Activated CD8-positive, alpha-beta memory T cell treated with anti-CD3 and anti-CD28 coated beads, Interleukin-2, amount 10 ng/mL, durations not matched to agents 7 days and 5 days (primary cell): ENCODE measurements at regions of chr21 and their contacts with region 1.

Region 1: DNA sequence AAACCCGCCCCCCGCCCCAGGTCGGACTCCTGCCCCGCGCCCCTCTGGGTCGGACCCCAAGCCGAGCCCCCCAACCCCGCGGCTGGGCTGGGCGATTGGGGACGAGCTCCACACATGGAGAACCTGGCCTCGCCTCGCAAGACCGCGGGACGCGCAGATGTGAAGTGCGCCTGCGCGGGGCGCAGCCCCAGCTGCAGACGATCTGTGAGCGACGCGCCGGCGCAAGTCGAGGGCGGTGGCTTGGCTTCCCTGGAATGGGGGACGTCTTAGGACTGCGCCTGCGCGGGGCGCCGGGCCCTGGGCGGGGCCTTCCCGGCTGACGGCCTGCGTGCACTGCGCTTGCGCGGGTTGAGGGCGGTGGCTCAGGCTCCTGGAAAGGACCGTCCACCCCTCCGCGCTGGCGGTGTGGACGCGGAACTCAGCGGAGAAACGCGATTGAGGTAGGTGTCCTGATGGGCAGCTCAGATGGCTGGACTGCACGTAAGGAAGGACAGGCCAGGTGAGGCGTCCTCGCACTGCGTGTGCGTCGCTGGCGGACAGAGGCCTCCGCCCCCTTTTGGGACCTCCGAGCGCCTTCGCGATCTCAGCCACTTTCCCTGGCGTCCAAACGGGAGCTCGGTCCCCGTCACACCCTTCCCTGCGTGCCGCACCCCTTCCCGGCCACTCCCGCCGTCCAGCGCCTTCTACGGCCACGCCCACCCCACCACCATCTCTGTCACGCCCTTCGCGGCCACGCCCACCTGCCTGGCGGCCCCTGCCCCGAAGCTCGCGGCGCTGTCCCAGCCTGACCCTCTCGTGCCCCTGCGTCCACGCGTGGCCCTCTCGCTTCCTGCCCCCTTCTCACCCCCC is at the start of gene PRMT2:
- DNase-seq: peak; percentile 98
- ATAC-seq: peak; percentile 91
- H3K4me3 Mint-ChIP-seq: peak within 1 kb of the TSS; percentile 84
- H3K27ac Mint-ChIP-seq: peak within 1 kb of the TSS; percentile 94
- H3K4me1 Mint-ChIP-seq: peaks cover 57% of the 10 kb centered on the region
- H3K27me3 Mint-ChIP-seq: no peaks in the 10 kb centered on the region
- total RNA-seq, gene PRMT2: 99.7 to 107 TPM

Region 2: GRCh38 chr21:46622226-46622625 is 13.3 kb before region 1 on chr21:
- CTCF ChIA-PET with region 1: interaction called, 30 read pairs
- DNase-seq: peak; percentile 73
- ATAC-seq: peak; percentile 90
- H3K4me3 Mint-ChIP-seq: peak overlapping the region; percentile 4
- H3K27ac Mint-ChIP-seq: peak overlapping the region; percentile 81
- H3K4me1 Mint-ChIP-seq: peaks cover 29% of the 10 kb centered on the region
- H3K27me3 Mint-ChIP-seq: no peaks in the 10 kb centered on the region